Endothelial cell of umbilical vein (primary cell): ENCODE measurements at regions of chr2 and their contacts with region 1.

Region 1: GRCh38 chr2:207847807-207848544 is 78.3 kb upstream of the FZD5 start:
- DNase-seq: peak; percentile 97
- H3K4me3 ChIP-seq: no peak overlapping the region
- H3K27ac ChIP-seq: peak overlapping the region; percentile 47
- H3K4me1 ChIP-seq: peaks cover 18% of the 10 kb centered on the region
- H3K27me3 ChIP-seq: no peaks in the 10 kb centered on the region
- CTCF ChIP-seq: no peak
- POLR2A ChIP-seq: peak; percentile 61

Region 2: DNA sequence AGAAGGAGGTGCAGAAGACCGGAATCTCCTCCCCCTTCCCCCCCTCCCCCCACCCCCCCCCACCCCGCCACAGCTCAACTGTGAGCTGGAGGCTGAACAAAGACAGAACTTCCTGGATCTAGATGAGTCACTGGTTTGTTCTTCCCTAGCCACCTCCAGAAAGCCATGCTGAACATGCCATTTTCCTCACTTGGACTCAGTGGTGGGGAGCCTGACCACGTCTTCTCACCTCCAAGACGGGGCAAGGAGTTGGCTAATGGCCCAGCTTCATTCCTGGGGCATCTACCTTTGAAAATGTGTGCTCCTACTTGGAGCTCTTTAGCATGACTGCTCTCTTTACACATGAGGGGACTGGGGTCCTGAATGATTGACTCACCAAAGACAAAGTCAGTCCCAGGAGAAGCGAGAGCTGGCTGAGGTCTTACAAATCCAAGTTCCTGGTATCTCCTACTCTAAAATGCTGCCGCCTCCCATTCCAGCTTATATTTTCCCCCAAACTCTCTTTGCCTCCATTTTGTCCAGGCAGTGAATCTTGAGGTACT is 55.7 kb before region 1 on chr2:
- CTCF ChIA-PET with region 1: interaction called, 4 read pairs
- POLR2A ChIA-PET with region 1: no interaction called
- dilution Hi-C with region 1: no loop called
- intact Hi-C with region 1: loop called (anchors 2 kb)
- DNase-seq: peak; percentile 75
- H3K4me3 ChIP-seq: no peak overlapping the region
- H3K27ac ChIP-seq: peak overlapping the region; percentile 98
- H3K4me1 ChIP-seq: peaks cover 10% of the 10 kb centered on the region
- H3K27me3 ChIP-seq: no peaks in the 10 kb centered on the region
- CTCF ChIP-seq: no peak
- POLR2A ChIP-seq: peak; percentile 47

Region 3: DNA sequence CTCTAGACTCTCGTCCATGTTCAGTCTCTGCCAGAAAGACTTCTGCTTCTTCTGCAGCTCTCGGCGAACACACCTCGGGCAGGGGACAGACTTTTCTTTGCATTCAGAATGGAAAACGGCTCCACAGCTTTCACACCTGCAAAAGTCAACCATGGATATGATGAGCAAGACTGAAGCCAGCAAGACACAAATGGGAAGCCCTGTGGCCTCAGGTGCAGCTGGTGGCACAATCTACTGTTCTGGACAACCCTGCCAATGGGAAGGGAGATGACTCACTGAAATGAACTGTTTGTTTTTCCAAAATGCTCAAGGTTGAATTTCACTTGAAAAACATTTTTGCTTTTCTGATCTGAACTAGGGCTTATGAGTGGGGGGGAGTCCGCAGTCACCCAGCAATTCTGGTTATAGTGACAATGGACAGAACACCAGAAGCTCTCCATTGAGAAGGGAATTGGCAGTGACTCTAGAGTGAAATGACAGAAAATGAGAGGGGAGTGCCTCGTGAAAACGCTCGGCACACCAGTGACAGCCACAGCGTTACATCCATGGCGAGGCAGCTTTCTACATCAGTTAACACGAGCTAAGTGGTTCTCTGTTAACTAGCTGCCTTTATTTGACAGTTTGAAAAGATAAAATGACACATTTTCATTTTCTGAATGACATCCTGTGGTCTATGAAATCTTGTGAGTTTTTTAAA is 19.5 kb before region 1 on chr2:
- CTCF ChIA-PET with region 1: interaction called, 5 read pairs
- POLR2A ChIA-PET with region 1: no interaction called
- dilution Hi-C with region 1: no loop called
- intact Hi-C with region 1: loop called (anchors 1 kb)
- DNase-seq: peak; percentile 61
- H3K4me3 ChIP-seq: no peak overlapping the region
- H3K27ac ChIP-seq: peak overlapping the region; percentile 54
- H3K4me1 ChIP-seq: peaks cover 11% of the 10 kb centered on the region
- H3K27me3 ChIP-seq: no peaks in the 10 kb centered on the region
- CTCF ChIP-seq: no peak
- POLR2A ChIP-seq: no peak

Region 4: GRCh38 chr2:207836521-207837133 is 11.3 kb before region 1 on chr2:
- CTCF ChIA-PET with region 1: interaction called, 7 read pairs
- POLR2A ChIA-PET with region 1: no interaction called
- dilution Hi-C with region 1: no loop called
- intact Hi-C with region 1: loop called (anchors 1 kb)
- DNase-seq: no peak
- H3K4me3 ChIP-seq: no peak overlapping the region
- H3K27ac ChIP-seq: no peak overlapping the region
- H3K4me1 ChIP-seq: no peaks in the 10 kb centered on the region
- H3K27me3 ChIP-seq: no peaks in the 10 kb centered on the region
- CTCF ChIP-seq: no peak
- POLR2A ChIP-seq: no peak

Region 5: GRCh38 chr2:208025037-208025813 is 177.2 kb after region 1 on chr2 and contains the start of gene PLEKHM3:
- CTCF ChIA-PET with region 1: no interaction called
- POLR2A ChIA-PET with region 1: no interaction called
- dilution Hi-C with region 1: no loop called
- intact Hi-C with region 1: loop called (anchors 1 kb)
- DNase-seq: peak; percentile 87
- H3K4me3 ChIP-seq: peak within 1 kb of the TSS; percentile 74 to 96 (median 94)
- H3K27ac ChIP-seq: peak within 1 kb of the TSS; percentile 45
- H3K4me1 ChIP-seq: peaks cover 12% of the 10 kb centered on the region
- H3K27me3 ChIP-seq: peaks cover 0 to 1% of the 10 kb centered on the region in 2 experiments
- CTCF ChIP-seq: no peak
- POLR2A ChIP-seq: peak; percentile 82
- total RNA-seq, gene PLEKHM3: 8.5 and 9.1 TPM in 2 replicates